PC-3 (cell line): ENCODE measurements at regions of chr19 and their contacts with region 1.

Region 1: DNA sequence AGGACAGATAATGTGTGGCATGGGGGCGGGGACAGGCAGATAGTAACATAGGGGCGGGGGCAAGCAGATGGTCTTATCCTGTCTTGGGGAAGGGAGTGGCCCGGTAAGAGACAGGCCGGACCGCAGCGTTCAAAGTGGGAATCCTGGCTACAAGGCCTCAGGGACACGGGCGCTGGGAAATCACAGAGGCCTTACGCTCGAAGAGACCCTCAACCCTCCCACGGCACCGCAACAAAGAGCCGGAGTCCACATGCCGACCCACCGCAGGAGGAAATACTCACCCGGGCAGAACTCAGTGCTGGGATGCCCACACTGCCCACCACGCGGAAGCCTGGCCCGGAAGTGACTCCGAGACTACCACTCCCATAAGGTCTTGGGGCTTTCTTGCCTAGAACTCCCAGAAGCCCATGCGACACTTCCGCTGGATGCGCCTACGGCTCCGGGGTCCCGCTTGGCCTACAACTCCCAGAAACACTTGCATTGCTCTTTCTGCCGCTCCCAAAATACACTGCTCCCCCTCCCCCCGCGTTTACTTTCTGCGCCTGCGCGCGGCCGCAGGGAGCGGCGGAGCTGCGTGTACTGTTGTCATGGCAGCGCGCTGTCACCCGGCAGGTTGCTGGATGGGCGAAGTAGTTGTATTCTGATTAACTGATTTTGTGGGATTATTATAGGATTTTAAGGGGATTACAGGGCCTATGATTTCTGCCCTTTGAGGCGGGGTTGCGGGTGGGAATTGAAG is at the start of gene CTU1:
- DNase-seq: peak; percentile 100
- ATAC-seq: peak; percentile 99
- H3K4me3 ChIP-seq: peak within 1 kb of the TSS; percentile 91
- H3K27ac ChIP-seq: peak within 1 kb of the TSS; percentile 39
- H3K4me1 ChIP-seq: peaks cover 17% of the 10 kb centered on the region; the same call in 1 of the 2 replicates
- H3K27me3 ChIP-seq: peaks cover 4% of the 10 kb centered on the region; the same call in 1 of the 2 replicates
- CTCF ChIP-seq: no peak
- total RNA-seq, gene CTU1: 29.0 and 40.8 TPM in 2 replicates

Region 2: DNA sequence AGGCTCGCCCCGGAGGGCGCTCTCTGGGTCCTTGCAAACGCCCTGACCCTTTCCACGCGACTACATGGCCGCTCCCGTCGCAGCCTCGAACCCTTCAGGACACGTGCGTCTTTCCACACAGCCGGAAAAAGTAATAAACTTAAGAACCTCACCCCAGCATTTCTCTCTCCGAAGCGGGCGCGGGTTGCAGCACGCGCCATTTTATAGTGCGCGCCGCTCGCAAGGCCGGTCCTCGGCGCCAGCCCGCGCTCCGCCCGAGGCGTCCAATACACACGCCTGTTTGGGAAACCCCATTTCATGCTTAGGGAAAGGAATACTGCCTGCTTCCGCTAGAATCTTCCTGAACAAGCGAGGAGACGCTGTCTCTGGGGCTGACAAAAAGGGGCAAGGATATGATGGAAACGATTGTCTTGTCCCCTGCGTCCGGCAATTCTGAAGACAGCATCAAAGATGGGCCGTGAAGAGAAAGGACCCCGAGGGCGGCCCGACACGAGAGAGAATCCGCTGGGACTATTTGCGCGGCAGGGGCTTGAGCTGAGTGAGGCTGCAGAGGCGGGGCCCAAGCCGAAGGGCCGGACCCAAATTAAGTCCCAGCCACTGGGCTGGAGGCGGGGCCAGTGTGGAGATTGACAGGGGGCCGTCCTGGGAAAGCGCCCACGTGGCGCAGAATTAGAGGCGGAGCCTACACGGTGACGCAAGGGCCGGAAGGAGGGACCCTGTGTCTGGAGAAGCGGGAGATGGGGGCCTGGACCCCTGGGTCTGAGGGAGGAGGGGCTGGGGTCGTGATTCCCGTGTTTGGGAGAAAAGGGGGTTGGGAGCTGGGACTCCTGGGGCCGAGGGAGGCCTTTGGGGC is 303.6 kb before region 1 on chr19:
- CTCF ChIA-PET with region 1: no interaction called
- POLR2A ChIA-PET with region 1: no interaction called
- intact Hi-C with region 1: loop called (anchors 5 kb)
- DNase-seq: peak; percentile 99
- ATAC-seq: peak; percentile 96
- H3K4me3 ChIP-seq: peak overlapping the region; percentile 92
- H3K27ac ChIP-seq: peak overlapping the region; percentile 85
- H3K4me1 ChIP-seq: peaks cover 19% of the 10 kb centered on the region
- H3K27me3 ChIP-seq: no peaks in the 10 kb centered on the region
- CTCF ChIP-seq: no peak

Region 3: DNA sequence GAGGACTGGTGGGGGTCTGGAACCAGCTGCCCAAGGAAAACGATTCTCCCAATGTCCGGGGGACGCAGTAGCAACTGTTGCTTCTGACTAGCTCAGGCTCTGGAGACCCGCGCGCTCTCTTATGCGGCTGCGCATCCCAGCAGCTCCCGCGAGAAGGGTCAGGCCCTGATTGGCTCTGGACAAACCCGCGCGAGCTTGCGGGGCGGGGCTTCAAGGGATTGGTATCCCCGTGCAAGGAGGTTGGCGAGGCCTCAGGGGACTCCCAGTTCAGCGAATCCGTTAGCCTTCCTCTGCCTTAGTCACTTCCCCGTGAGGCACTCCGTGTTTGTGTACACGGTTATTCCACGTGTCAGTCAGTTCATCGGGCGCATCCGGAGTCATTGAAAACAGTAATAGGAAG is 162.8 kb after region 1 on chr19:
- CTCF ChIA-PET with region 1: no interaction called
- POLR2A ChIA-PET with region 1: no interaction called
- intact Hi-C with region 1: no loop called
- DNase-seq: no peak
- ATAC-seq: no peak
- H3K4me3 ChIP-seq: no peak overlapping the region
- H3K27ac ChIP-seq: no peak overlapping the region
- H3K4me1 ChIP-seq: no peaks in the 10 kb centered on the region
- H3K27me3 ChIP-seq: peaks cover 36% of the 10 kb centered on the region
- CTCF ChIP-seq: no peak